Dorsolateral prefrontal cortex (tissue), 120 donors: ENCODE measurements at regions of chr3 and their contacts with region 1.

Region 1: DNA sequence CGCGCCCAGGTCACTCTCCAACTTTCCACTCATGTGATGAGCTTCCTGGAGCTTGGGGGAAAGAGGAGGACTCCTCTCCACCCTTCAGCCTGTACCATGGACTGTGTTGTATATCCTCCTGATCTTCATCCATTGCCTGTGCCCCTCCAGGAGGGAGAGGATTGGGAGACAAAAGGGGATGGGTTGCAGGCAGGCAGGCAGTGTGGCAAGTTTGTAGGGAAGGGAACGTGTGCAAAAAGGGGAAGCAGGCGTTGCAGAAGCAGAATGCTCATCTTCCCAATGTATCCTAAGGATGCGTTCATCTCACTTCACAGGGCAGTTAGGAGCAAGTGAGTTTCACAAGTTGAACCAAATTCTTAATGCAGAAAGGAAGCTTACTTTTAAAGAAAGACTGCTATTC is 28.1 kb upstream of the GHSR start:
- DNase-seq: no peak
- H3K4me3 ChIP-seq: peak overlapping the region in 34 of 59 donors; percentile 29 to 70 (median 52)
- H3K27ac ChIP-seq: no peak overlapping the region
- H3K27me3 ChIP-seq: peaks cover 0 to 4% (median 0%) of the 10 kb centered on the region in 45 donors
- CTCF ChIP-seq: no peak

Region 2: GRCh38 chr3:172332256-172333041 is 143.9 kb before region 1 on chr3:
- intact Hi-C with region 1: loop called (anchors 5 to 10 kb)
- DNase-seq: peak in 8 of 10 donors; percentile 44 to 66 (median 64)
- H3K4me3 ChIP-seq: peak overlapping the region in 2 of 59 donors; percentile 20 to 24
- H3K27ac ChIP-seq: no peak overlapping the region
- H3K27me3 ChIP-seq: no peaks in the 10 kb centered on the region
- CTCF ChIP-seq: peak; percentile 70 to 96 (median 89)

Region 3: GRCh38 chr3:172580680-172581401 is 104.5 kb after region 1 on chr3:
- intact Hi-C with region 1: loop called in 1 of 2 experiments (anchors 10 kb)
- DNase-seq: no peak
- H3K4me3 ChIP-seq: no peak overlapping the region
- H3K27ac ChIP-seq: peak overlapping the region in 13 of 59 donors; percentile 4 to 60 (median 37)
- H3K27me3 ChIP-seq: no peaks in the 10 kb centered on the region
- CTCF ChIP-seq: no peak

Region 4: GRCh38 chr3:173538410-173538809 is 1062.1 kb after region 1 on chr3:
- intact Hi-C with region 1: no loop called
- DNase-seq: no peak
- H3K4me3 ChIP-seq: no peak overlapping the region
- H3K27ac ChIP-seq: no peak overlapping the region
- H3K27me3 ChIP-seq: no peaks in the 10 kb centered on the region
- CTCF ChIP-seq: peak in 3 of 56 donors; percentile 5 to 27 (median 20)